SK-N-SH (cell line): ENCODE measurements at regions of chr3 and their contacts with region 1.

Region 1: GRCh38 chr3:190321789-190322603 is at the start of gene CLDN1:
- DNase-seq: peak; percentile 86
- H3K4me3 ChIP-seq: peak within 1 kb of the TSS; percentile 50 to 62
- H3K27ac ChIP-seq: no peak within 1 kb of the TSS
- H3K4me1 ChIP-seq: peaks cover 4 to 10% of the 10 kb centered on the region in 2 experiments; a peak in 2 of 4 replicates
- H3K27me3 ChIP-seq: peaks cover 32% of the 10 kb centered on the region
- CTCF ChIP-seq: peak; percentile 86
- EP300 ChIP-seq: no peak
- RAD21 ChIP-seq: peak; percentile 62
- polyA plus RNA-seq, gene CLDN1: 0.82 and 1.8 TPM in 2 replicates

Region 2: GRCh38 chr3:189967254-189967865 is 354.6 kb before region 1 on chr3:
- CTCF ChIA-PET with region 1: interaction called, 75 read pairs
- POLR2A ChIA-PET with region 1: no interaction called
- DNase-seq: peak; percentile 48
- H3K4me3 ChIP-seq: no peak overlapping the region; a peak in 1 of 4 replicates
- H3K27ac ChIP-seq: no peak overlapping the region
- H3K4me1 ChIP-seq: no peaks in the 10 kb centered on the region
- H3K27me3 ChIP-seq: peaks cover 5% of the 10 kb centered on the region; the same call in 1 of the 2 replicates
- CTCF ChIP-seq: peak; percentile 89
- EP300 ChIP-seq: no peak
- RAD21 ChIP-seq: peak; percentile 81

Region 3: GRCh38 chr3:190205739-190206138 is 116.3 kb before region 1 on chr3:
- CTCF ChIA-PET with region 1: interaction called, 10 read pairs
- POLR2A ChIA-PET with region 1: no interaction called
- DNase-seq: no peak
- H3K4me3 ChIP-seq: no peak overlapping the region
- H3K27ac ChIP-seq: no peak overlapping the region
- H3K4me1 ChIP-seq: no peaks in the 10 kb centered on the region
- H3K27me3 ChIP-seq: no peaks in the 10 kb centered on the region; the same call in 1 of the 2 replicates
- CTCF ChIP-seq: no peak
- EP300 ChIP-seq: no peak
- RAD21 ChIP-seq: no peak

Region 4: DNA sequence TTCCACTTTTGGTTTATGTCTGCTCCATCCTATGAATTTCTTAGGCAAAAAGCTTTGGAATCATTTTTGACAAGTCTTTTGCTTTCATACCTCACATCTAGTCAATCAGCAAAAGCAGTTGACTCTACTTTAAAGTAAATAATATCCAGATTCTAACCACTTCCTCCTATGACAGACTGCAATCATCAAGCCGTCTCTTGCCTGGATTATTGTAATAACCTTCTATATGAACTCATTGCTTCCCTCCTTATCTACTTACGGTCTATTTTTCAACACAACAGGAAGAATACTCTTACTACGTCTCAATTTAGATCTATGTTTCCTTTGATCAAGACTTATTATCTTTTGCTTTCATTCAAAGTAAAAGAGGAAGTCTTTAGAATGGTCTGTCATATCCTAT is 20.4 kb before region 1 on chr3:
- CTCF ChIA-PET with region 1: interaction called, 22 read pairs
- POLR2A ChIA-PET with region 1: no interaction called
- DNase-seq: no peak
- H3K4me3 ChIP-seq: no peak overlapping the region
- H3K27ac ChIP-seq: no peak overlapping the region
- H3K4me1 ChIP-seq: no peaks in the 10 kb centered on the region
- H3K27me3 ChIP-seq: peaks cover 12% of the 10 kb centered on the region
- CTCF ChIP-seq: no peak
- EP300 ChIP-seq: no peak
- RAD21 ChIP-seq: no peak

Region 5: GRCh38 chr3:190336516-190337189 is 14.7 kb after region 1 on chr3:
- CTCF ChIA-PET with region 1: interaction called, 19 read pairs
- POLR2A ChIA-PET with region 1: no interaction called
- DNase-seq: no peak
- H3K4me3 ChIP-seq: no peak overlapping the region
- H3K27ac ChIP-seq: no peak overlapping the region
- H3K4me1 ChIP-seq: peaks cover 0 to 8% of the 10 kb centered on the region in 2 experiments; a peak in 1 of 4 replicates
- H3K27me3 ChIP-seq: no peaks in the 10 kb centered on the region
- CTCF ChIP-seq: no peak
- EP300 ChIP-seq: no peak
- RAD21 ChIP-seq: no peak

Region 6: DNA sequence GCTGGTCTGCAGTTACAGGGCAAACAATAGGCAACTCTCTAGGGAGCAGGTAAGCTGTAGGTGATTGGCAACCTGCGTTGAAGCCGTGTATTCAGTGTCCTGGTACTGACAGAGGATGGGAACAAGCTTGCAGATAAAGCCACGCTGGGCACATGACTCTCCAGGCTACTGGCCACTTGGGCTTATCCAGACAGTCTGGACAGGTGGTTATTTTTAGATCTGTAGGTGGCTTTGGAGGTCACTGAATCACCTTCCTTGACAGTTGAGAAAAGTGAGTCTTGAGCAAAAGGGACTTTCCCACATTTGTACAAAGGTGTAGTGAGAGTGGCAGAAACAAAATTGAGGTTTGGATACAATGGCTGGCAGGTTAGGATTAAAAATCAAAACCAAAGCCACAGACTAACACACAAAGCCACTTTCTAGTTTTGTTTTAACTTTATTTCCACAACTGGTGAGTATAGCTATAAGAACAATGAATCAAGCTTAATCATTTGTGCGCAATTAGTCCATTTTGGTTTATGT is 169.6 kb after region 1 on chr3:
- CTCF ChIA-PET with region 1: no interaction called
- POLR2A ChIA-PET with region 1: no interaction called
- DNase-seq: no peak
- H3K4me3 ChIP-seq: no peak overlapping the region
- H3K27ac ChIP-seq: no peak overlapping the region
- H3K4me1 ChIP-seq: no peaks in the 10 kb centered on the region; a peak in 1 of 4 replicates
- H3K27me3 ChIP-seq: peaks cover 11% of the 10 kb centered on the region; the same call in 1 of the 2 replicates
- CTCF ChIP-seq: no peak
- EP300 ChIP-seq: no peak
- RAD21 ChIP-seq: no peak